Activated B cell treated with CpG ODN at 0.5 μM for 24 hours (primary cell): ENCODE measurements at regions of chr6 and their contacts with region 1.

Region 1: DNA sequence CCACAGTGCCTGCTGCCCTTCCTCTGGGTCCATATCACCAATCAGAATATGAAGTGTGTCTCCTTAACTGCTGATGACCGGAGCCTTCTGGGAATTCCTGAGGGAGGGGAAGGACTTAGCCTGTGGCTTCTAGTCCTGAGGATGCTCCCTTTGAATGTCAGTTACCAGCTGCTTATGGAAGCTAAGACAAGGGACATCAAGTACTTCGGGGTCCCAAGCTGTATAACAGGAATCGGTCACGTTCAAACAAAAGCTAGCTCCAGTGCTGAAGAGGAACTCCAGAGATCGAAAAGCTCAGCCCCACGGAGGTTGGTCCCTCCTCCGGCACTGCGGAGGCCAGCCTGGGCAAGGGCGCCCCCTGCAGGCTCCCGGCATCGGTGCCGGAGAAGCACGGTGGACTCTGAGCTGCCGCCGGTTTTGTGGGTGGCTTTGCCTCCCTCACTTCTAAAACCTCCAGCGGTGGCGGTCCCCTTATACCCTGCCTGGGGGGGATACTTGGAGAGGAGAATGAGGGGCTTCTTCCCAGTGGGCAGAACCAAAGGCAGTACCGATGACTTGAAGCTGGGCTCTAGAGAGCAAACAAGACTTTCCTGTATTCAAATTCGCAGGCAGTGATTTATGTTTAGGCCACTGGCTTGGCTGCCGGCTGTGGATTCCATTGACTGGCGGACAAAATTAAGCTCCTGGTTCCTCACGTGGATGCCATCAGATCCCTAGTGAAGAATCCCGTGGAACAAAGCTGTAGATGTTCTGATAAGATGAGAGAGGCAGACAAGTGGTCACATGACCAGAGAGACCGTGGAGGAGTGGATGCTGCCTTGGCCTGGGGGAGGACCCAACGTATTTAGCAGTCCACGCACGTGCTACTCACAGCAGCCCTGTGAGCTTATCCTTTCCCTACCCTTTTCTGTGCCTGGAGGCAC is 16.2 kb upstream of the UBR2 start:
- DNase-seq: peak; percentile 90
- ATAC-seq: peak; percentile 99
- H3K4me3 Mint-ChIP-seq: peak overlapping the region; percentile 81
- H3K27ac Mint-ChIP-seq: peak overlapping the region; percentile 83
- H3K4me1 Mint-ChIP-seq: peaks cover 12% of the 10 kb centered on the region
- H3K27me3 Mint-ChIP-seq: no peaks in the 10 kb centered on the region
- CTCF ChIP-seq: peak; percentile 90

Region 2: DNA sequence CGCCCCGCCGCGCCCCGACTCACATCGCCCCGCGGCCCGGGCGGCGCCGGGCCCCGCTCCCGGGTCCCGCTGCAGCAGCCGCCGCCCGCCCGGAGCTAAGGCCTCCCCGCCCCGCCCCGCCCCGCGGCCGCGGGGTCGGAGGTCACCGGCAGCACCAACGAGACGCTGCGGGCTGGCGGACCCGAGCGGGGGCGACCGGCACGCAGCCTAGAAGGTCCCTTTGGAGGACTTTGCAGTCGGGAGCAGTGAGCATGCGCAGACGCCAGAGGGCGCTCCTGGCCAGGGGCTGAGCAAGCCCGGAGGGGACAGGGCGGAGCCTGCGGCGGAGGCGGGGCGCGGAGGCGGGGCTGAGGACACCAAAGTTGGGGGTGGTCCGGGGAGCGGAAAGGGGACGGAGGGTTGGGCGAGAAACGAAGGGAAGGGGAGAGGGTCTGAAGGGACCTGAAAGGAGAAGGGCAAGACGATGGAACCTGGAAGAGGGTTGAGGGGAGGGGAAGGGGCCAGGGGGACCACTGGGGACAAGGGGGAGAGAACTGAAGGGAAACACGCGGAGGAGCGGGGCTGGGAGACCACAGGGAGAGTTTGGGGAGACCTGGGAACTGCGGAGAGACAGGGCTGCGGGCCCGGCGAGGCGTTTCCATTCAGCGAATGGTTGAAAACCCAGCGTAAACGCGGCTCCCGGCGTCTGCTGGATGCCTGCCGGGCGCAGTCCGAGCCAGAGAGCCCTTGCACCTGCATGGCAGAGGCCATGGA is 767.7 kb before region 1 on chr6 and contains the start of gene FRS3:
- CTCF ChIA-PET with region 1: no interaction called
- POLR2A ChIA-PET with region 1: no interaction called
- intact Hi-C with region 1: loop called (anchors 5 kb)
- DNase-seq: peak; percentile 100
- ATAC-seq: peak; percentile 95
- H3K4me3 Mint-ChIP-seq: peak within 1 kb of the TSS; percentile 93
- H3K27ac Mint-ChIP-seq: peak within 1 kb of the TSS; percentile 63
- H3K4me1 Mint-ChIP-seq: peaks cover 25% of the 10 kb centered on the region
- H3K27me3 Mint-ChIP-seq: no peaks in the 10 kb centered on the region
- CTCF ChIP-seq: no peak
- total RNA-seq, gene FRS3: 6.5 and 6.7 TPM in 2 replicates

Region 3: DNA sequence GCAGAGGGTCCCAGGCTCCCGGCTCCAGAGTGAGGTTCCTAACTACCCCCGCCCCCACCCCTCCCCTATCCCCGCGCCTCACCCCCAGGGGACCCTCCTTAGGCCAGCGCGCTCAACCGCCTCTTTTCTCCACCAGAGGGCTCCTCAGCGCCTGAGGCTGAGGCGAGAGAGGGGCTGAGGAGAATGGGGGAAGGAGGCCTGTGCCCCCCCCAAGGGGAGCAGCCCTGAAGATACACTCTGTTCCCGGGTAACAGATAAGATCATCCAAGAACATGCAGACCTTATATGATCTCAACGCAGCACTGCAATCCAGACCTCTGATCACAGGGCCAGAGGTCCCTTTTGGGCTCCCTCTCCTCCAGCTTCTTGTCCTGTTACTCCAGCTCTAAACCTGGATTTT is 286.7 kb before region 1 on chr6:
- CTCF ChIA-PET with region 1: interaction called, 57 read pairs
- POLR2A ChIA-PET with region 1: interaction called, 3 read pairs
- intact Hi-C with region 1: loop called (anchors 1 kb)
- DNase-seq: no peak
- ATAC-seq: peak; percentile 49
- H3K4me3 Mint-ChIP-seq: no peak overlapping the region
- H3K27ac Mint-ChIP-seq: no peak overlapping the region
- H3K4me1 Mint-ChIP-seq: no peaks in the 10 kb centered on the region
- H3K27me3 Mint-ChIP-seq: no peaks in the 10 kb centered on the region
- CTCF ChIP-seq: no peak

Region 4: GRCh38 chr6:42453031-42453653 is 94.5 kb before region 1 on chr6:
- CTCF ChIA-PET with region 1: interaction called, 6 read pairs
- POLR2A ChIA-PET with region 1: no interaction called
- intact Hi-C with region 1: loop called (anchors 1 kb)
- DNase-seq: peak; percentile 43
- ATAC-seq: peak; percentile 74
- H3K4me3 Mint-ChIP-seq: peak overlapping the region; percentile 90
- H3K27ac Mint-ChIP-seq: no peak overlapping the region
- H3K4me1 Mint-ChIP-seq: peaks cover 35% of the 10 kb centered on the region
- H3K27me3 Mint-ChIP-seq: peaks cover 3% of the 10 kb centered on the region
- CTCF ChIP-seq: no peak

Region 5: DNA sequence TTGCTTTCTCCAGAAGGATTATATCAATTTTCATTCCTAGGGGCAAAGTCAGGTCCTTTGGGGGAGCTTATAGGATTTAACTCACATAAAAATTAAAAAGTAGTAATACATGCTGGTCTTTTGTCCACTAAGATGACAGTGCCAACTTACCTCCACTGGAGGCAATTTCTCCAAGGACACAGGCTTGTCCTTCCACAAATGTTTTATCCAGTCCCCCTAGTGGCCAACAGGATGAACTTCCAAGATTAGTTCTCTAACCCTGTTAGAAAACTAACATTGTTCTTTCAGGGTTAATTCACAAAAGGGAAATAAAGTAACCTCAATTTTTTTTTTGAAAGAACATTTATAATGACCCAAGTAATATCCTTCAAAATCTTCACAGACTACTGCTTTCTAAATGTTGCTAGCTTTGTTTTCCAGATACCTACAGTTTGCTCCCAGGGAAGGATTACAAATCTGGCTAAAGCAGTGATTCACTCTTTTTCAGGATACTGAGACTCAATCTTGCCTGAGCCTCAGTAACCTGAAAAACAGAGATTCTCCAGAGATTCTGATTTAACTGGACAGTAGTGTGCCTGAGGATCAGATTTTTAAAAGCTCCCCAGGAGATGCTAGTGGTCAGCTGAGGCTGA is 15.5 kb before region 1 on chr6:
- CTCF ChIA-PET with region 1: interaction called, 24 read pairs
- POLR2A ChIA-PET with region 1: interaction called, 4 read pairs
- intact Hi-C with region 1: no loop called
- DNase-seq: no peak
- ATAC-seq: peak; percentile 64
- H3K4me3 Mint-ChIP-seq: no peak overlapping the region
- H3K27ac Mint-ChIP-seq: no peak overlapping the region
- H3K4me1 Mint-ChIP-seq: no peaks in the 10 kb centered on the region
- H3K27me3 Mint-ChIP-seq: peaks cover 3% of the 10 kb centered on the region
- CTCF ChIP-seq: peak; percentile 58

Region 6: DNA sequence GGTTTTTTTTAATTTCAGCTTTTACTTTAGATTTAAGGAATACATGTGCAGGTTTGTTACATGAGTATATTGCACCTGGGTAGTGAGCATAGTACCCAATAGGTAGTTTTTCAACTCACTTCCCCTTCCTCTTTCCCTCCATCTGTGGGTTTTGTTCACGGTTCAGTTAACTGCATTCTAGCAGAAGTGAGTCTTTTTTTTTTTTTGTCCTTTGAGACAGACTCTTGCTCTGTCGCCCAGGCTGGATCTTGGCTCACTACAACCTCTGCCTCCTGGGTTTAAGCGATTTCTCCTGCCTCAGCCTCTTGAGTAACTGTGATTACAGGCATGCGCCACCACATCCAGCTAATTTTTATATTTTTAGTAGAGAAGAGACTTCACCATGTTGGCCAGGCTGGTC is 24.9 kb after region 1 on chr6:
- CTCF ChIA-PET with region 1: interaction called, 10 read pairs
- POLR2A ChIA-PET with region 1: interaction called, 4 read pairs
- intact Hi-C with region 1: no loop called
- DNase-seq: peak; percentile 25
- ATAC-seq: peak; percentile 91
- H3K4me3 Mint-ChIP-seq: peak overlapping the region; percentile 63
- H3K27ac Mint-ChIP-seq: peak overlapping the region; percentile 91
- H3K4me1 Mint-ChIP-seq: peaks cover 47% of the 10 kb centered on the region
- H3K27me3 Mint-ChIP-seq: no peaks in the 10 kb centered on the region
- CTCF ChIP-seq: no peak